ENCODE measurements at regions of chr7 and their contacts with region 1.

Region 1: DNA sequence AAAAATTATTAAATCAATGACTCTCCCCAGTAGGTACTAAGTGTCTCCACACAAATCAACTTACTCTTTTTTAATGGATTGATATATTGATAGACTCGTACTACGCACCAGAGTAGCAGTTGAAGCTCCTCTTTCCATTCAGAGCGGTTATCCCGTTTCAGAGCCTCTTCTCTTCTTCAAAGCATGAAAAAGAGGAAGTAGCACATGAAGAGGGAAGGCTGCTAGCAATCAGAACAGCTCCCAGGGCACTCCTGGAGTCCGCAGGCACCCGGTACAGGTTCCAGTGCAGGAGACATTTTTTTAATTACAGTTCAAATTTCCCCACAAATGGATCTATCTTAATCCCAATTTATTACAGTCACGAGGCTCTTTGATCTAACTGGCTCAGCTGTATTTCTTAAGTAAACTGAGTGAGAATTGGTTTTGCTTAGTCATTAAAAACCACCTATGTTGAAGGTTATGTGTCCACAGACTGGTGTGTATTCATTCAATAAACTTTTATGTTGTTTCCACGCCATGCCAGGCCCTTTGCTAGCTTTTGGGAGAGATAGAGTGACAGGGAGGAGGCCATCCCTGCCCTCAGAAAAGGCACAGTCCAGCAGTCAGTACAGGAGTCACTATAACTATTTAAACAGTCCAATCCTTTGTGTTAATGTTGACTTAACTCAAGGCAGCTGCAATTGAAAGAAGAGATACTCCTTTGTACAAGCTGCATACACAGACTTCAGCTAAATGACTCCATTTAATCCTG is 32.1 kb upstream of the CALN1 start:
- DNase-seq: peak; percentile 73
- ATAC-seq: peak; percentile 95
- H3K4me3 ChIP-seq: peak overlapping the region in 1 of 3 experiments; percentile 22; a peak in 1 of 6 replicates
- H3K27ac ChIP-seq: no peak overlapping the region
- H3K4me1 ChIP-seq: peaks cover 18% of the 10 kb centered on the region
- H3K27me3 ChIP-seq: peaks cover 8 to 39% of the 10 kb centered on the region in 2 experiments
- CTCF ChIP-seq: no peak
- EP300 ChIP-seq: no peak
- POLR2A ChIP-seq: no peak
- RAD21 ChIP-seq: no peak

Region 2: DNA sequence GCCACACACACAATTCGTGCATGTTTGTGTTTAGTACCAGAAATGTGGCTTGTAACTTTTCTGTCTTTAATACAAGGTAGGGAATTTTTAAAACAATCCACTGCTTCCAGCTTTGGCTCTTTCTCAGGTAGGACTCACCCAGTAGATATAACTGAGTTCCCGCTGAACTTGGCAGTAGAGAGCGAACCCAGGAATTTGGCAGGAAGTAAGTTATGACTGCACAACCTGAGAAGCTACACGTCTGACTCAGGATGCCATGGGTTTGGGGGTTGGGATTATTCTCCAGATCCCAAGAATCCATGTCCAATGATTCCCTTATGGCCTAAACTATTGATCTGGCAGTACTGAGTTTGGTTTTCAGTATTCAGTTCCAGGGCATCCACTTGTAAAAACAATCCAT is 531.7 kb before region 1 on chr7:
- CTCF ChIA-PET with region 1: no interaction called
- POLR2A ChIA-PET with region 1: no interaction called
- in situ Hi-C with region 1: no loop called
- intact Hi-C with region 1: no loop called
- DNase-seq: no peak
- ATAC-seq: no peak
- H3K4me3 ChIP-seq: no peak overlapping the region
- H3K27ac ChIP-seq: no peak overlapping the region
- H3K4me1 ChIP-seq: no peaks in the 10 kb centered on the region
- H3K27me3 ChIP-seq: no peaks in the 10 kb centered on the region; a peak in 1 of 5 replicates
- CTCF ChIP-seq: no peak
- EP300 ChIP-seq: no peak
- POLR2A ChIP-seq: no peak
- RAD21 ChIP-seq: no peak

Region 3: DNA sequence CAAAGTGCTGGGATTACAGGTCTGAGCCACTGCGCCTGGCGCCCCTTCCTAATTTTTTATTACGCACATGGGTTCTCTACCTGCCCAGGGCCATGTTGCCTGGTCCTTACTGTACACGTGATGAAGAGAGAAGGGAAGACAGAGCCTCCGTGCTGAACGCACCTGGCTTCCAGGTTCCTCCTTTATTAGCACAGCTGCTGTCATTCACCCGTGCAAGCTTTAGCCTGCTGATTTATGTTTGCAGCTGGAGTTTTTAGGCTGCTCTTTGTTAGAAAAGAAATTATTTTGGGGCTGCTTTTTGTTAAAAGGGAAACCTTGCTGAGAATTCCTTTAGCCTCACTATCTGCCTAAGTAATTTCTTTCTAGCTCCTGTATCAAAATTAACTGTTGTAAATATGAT is 449.1 kb before region 1 on chr7:
- CTCF ChIA-PET with region 1: no interaction called
- POLR2A ChIA-PET with region 1: no interaction called
- in situ Hi-C with region 1: no loop called
- intact Hi-C with region 1: loop called (anchors 5 kb)
- DNase-seq: no peak
- ATAC-seq: no peak
- H3K4me3 ChIP-seq: no peak overlapping the region
- H3K27ac ChIP-seq: no peak overlapping the region
- H3K4me1 ChIP-seq: no peaks in the 10 kb centered on the region
- H3K27me3 ChIP-seq: no peaks in the 10 kb centered on the region; a peak in 1 of 5 replicates
- CTCF ChIP-seq: no peak
- EP300 ChIP-seq: no peak
- POLR2A ChIP-seq: no peak
- RAD21 ChIP-seq: no peak

Region 4: DNA sequence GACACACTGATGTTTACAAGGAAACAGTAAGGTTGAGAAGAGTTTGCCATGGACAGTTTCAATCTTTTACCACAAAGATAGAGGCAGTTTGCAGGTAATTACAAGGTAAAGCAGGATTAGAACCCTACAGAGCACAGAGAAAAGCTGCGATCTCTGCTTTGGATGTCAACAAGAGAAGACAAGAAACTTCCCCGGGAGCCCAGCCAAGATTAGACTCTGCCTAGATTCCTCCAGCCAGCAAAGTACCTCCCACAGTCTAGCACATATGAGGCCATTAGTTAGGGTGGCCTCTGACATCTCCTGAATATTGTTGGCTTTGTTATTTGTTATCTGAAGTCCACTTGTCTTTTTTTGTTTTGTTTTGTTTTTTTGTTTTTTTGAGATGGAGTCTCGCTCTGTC is 210.1 kb before region 1 on chr7:
- CTCF ChIA-PET with region 1: no interaction called
- POLR2A ChIA-PET with region 1: no interaction called
- in situ Hi-C with region 1: no loop called
- intact Hi-C with region 1: no loop called
- DNase-seq: no peak
- ATAC-seq: no peak
- H3K4me3 ChIP-seq: no peak overlapping the region
- H3K27ac ChIP-seq: no peak overlapping the region
- H3K4me1 ChIP-seq: no peaks in the 10 kb centered on the region
- H3K27me3 ChIP-seq: no peaks in the 10 kb centered on the region
- CTCF ChIP-seq: no peak
- EP300 ChIP-seq: no peak
- POLR2A ChIP-seq: no peak
- RAD21 ChIP-seq: no peak

Region 5: DNA sequence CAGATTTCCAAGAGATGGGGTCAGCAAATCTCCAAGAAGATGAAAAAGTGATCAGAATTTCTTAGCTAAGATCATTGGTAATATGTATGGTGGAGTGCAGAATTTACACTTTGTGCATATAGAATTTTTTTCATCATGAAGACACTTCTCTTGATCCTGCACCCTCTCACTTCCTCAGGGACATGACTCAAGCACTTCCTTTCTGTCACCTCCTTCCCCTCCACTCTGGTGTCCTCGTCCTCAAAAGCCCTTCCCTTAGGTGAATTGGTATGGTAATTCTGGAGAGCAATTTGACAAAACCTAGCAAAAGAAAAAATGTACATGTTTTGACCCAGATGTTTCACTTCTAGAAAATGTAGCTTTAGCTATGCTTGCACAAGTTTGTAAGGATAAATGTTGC is 50.2 kb before region 1 on chr7:
- CTCF ChIA-PET with region 1: no interaction called
- POLR2A ChIA-PET with region 1: no interaction called
- in situ Hi-C with region 1: no loop called
- intact Hi-C with region 1: no loop called
- DNase-seq: no peak
- ATAC-seq: no peak
- H3K4me3 ChIP-seq: no peak overlapping the region
- H3K27ac ChIP-seq: no peak overlapping the region
- H3K4me1 ChIP-seq: no peaks in the 10 kb centered on the region
- H3K27me3 ChIP-seq: peaks cover 2 to 7% of the 10 kb centered on the region in 2 experiments; a peak in 2 of 5 replicates
- CTCF ChIP-seq: no peak
- EP300 ChIP-seq: no peak
- POLR2A ChIP-seq: no peak
- RAD21 ChIP-seq: no peak

Region 6: DNA sequence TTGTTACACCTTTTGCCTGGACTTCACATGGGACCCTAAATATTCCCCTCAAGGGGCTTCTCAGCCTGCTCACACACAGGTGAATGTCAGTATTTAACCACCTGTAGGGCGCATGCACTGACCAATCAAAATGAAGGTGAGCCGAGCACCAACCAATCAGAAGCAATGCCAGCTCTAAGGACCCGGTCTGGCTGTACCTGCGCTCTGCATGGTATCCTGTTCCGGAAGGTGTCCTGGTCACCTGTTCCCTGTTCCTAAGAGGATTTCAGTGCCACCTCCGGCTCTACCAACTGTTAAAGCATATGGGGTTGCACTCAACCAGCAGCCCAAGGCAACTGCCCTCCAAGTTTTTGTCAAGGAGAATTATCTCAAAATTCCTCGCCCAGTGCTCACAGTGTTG is 13.7 kb before region 1 on chr7:
- CTCF ChIA-PET with region 1: no interaction called
- POLR2A ChIA-PET with region 1: no interaction called
- in situ Hi-C with region 1: no loop called
- intact Hi-C with region 1: no loop called
- DNase-seq: no peak
- ATAC-seq: no peak
- H3K4me3 ChIP-seq: no peak overlapping the region
- H3K27ac ChIP-seq: no peak overlapping the region
- H3K4me1 ChIP-seq: no peaks in the 10 kb centered on the region
- H3K27me3 ChIP-seq: peaks cover 0 to 7% of the 10 kb centered on the region in 2 experiments; a peak in 1 of 5 replicates
- CTCF ChIP-seq: no peak
- EP300 ChIP-seq: no peak
- POLR2A ChIP-seq: no peak
- RAD21 ChIP-seq: no peak

Measured in HepG2 (cell line).